Head of caudate nucleus (tissue), 42 donors: ENCODE measurements at regions of chr9 and their contacts with region 1.

Region 1: GRCh38 chr9:122125158-122125508 is 32.0 kb upstream of the TTLL11 start:
- DNase-seq: peak; percentile 80 to 95 (median 91)

Region 2: GRCh38 chr9:122020398-122020797 is 104.7 kb before region 1 on chr9:
- intact Hi-C with region 1: no loop called
- DNase-seq: peak in 2 of 42 donors; percentile 4 to 33

Region 3: DNA sequence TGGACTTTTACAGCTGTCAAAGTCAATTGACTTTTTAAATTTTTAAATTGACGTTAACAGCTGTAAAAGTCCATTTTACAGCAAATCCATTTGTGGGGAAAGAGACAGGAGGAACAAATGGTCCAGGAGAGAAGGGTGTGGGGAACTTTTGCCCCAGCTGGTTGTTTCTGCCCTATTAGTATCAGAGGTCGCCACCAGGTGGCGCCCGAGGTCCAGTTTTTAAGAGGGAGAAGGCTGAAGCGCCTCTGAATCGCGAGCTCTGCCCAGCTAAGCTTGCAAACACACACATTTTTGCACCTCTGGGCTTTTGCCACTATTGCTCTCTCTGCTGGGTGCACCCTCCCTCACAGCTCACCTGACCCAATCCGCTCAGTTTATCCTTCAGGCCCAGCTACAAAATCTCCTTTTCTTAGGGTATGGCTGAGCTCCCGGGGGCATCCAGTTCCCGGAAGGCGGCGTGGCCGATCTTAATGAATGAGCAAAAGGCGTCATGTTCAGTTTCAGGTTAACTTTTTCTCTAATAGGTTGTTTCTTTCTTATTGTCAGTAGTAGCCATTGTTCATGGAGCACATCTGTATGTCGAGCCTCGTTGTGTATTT is 25.8 kb before region 1 on chr9:
- intact Hi-C with region 1: loop called (anchors 2 kb)
- DNase-seq: peak; percentile 62 to 95 (median 88)